Naive thymus-derived CD4-positive, alpha-beta T cell (primary cell): ENCODE measurements at regions of chr17 and their contacts with region 1.

Region 1: GRCh38 chr17:16438557-16439302 is 23.4 kb downstream of the TRPV2 start:
- DNase-seq: peak; percentile 81 to 97 (median 95)
- ATAC-seq: peak; percentile 93
- H3K4me3 ChIP-seq: peak overlapping the region; percentile 89
- H3K4me3 Mint-ChIP-seq: peak overlapping the region; percentile 91 to 100 (median 100)
- H3K27ac ChIP-seq: peak overlapping the region; percentile 92
- H3K27ac Mint-ChIP-seq: peak overlapping the region; percentile 91 to 100 (median 99)
- H3K4me1 ChIP-seq: peaks cover 27 to 41% of the 10 kb centered on the region in 2 donors
- H3K4me1 Mint-ChIP-seq: peaks cover 30 to 55% (median 47%) of the 10 kb centered on the region in 7 donors
- H3K27me3 ChIP-seq: no peaks in the 10 kb centered on the region
- H3K27me3 Mint-ChIP-seq: no peaks in the 10 kb centered on the region

Region 2: GRCh38 chr17:16285957-16286640 is 152.6 kb before region 1 on chr17:
- CTCF ChIA-PET with region 1: no interaction called
- POLR2A ChIA-PET with region 1: no interaction called
- intact Hi-C with region 1: loop called (anchors 2 to 5 kb)
- DNase-seq: peak; percentile 41 to 76 (median 72)
- ATAC-seq: peak; percentile 95
- H3K4me3 ChIP-seq: peak overlapping the region; percentile 53
- H3K4me3 Mint-ChIP-seq: peak overlapping the region; percentile 71 to 85 (median 80)
- H3K27ac ChIP-seq: peak overlapping the region; percentile 81
- H3K27ac Mint-ChIP-seq: peak overlapping the region; percentile 93 to 99 (median 97)
- H3K4me1 ChIP-seq: peaks cover 36 to 50% of the 10 kb centered on the region in 2 donors
- H3K4me1 Mint-ChIP-seq: peaks cover 41 to 68% (median 62%) of the 10 kb centered on the region in 7 donors
- H3K27me3 ChIP-seq: no peaks in the 10 kb centered on the region
- H3K27me3 Mint-ChIP-seq: no peaks in the 10 kb centered on the region

Region 3: DNA sequence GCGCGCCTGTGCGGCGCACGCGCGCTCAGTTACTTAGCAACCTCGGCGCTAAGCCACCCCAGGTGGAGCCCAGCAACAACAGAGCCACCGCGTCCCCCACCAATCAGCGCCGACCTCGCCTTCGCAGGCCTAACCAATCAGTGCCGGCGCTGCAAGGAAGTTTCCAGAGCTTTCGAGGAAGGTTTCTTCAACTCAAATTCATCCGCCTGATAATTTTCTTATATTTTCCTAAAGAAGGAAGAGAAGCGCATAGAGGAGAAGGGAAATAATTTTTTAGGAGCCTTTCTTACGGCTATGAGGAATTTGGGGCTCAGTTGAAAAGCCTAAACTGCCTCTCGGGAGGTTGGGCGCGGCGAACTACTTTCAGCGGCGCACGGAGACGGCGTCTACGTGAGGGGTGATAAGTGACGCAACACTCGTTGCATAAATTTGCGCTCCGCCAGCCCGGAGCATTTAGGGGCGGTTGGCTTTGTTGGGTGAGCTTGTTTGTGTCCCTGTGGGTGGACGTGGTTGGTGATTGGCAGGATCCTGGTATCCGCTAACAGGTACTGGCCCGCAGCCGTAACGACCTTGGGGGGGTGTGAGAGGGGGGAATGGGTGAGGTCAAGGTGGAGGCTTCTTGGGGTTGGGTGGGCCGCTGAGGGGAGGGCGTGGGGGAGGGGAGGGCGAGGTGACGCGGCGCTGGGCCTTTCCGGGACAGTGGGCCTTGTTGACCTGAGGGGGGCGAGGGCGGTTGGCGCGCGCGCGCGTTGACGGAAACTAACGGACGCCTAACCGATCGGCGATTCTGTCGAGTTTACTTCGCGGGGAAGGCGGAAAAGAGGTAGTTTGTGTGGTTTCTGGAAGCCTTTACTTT is 57.9 kb before region 1 on chr17 and contains the start of gene UBB:
- CTCF ChIA-PET with region 1: no interaction called
- POLR2A ChIA-PET with region 1: interaction called, 24 read pairs
- intact Hi-C with region 1: loop called (anchors 1 kb)
- DNase-seq: peak; percentile 83 to 97 (median 94)
- ATAC-seq: peak; percentile 96
- H3K4me3 ChIP-seq: peak within 1 kb of the TSS; percentile 66
- H3K4me3 Mint-ChIP-seq: peak within 1 kb of the TSS; percentile 85 to 99 (median 95)
- H3K27ac ChIP-seq: peak within 1 kb of the TSS; percentile 86
- H3K27ac Mint-ChIP-seq: peak within 1 kb of the TSS; percentile 93 to 100 (median 97)
- H3K4me1 ChIP-seq: peaks cover 6 to 13% of the 10 kb centered on the region in 2 donors
- H3K4me1 Mint-ChIP-seq: peaks cover 22 to 48% (median 39%) of the 10 kb centered on the region in 7 donors
- H3K27me3 ChIP-seq: no peaks in the 10 kb centered on the region
- H3K27me3 Mint-ChIP-seq: peaks cover 0 to 5% (median 0%) of the 10 kb centered on the region in 5 donors
- total RNA-seq, gene UBB: 537 to 1,283 (median 621) TPM

Region 4: DNA sequence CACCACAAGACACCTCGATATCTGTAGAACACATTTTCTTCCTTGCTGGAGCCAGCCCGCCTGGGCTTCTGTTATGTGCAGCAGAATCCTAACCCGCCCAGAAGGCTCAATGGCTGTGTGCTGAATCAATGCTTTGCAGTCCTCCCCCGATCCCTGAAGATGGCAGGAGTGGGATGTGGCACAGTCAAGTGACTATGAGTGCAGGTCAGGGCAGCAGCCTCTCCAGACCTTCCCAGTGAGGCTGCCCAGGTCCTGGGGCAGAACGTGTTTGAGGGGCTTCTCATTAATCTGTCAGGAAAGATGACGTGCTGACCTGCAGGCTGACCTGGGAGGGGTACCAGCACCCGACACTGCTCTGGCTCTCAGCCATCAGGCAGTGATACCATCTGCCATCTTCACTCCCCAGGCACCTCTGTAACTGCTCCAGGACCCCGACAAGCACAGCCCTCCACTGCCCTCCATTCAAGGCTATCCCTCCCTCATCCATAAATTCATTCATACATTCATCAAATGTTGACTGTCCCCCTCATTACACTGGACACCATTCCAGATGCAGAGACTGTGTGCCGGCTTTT is 18.1 kb after region 1 on chr17:
- CTCF ChIA-PET with region 1: interaction called, 9 read pairs
- POLR2A ChIA-PET with region 1: interaction called, 5 read pairs
- intact Hi-C with region 1: loop called in 1 of 2 experiments (anchors 1 kb)
- DNase-seq: no peak
- ATAC-seq: no peak
- H3K4me3 ChIP-seq: no peak overlapping the region
- H3K4me3 Mint-ChIP-seq: no peak overlapping the region
- H3K27ac ChIP-seq: no peak overlapping the region
- H3K27ac Mint-ChIP-seq: peak overlapping the region in 2 of 9 donors; percentile 23 to 45
- H3K4me1 ChIP-seq: no peaks in the 10 kb centered on the region
- H3K4me1 Mint-ChIP-seq: peaks cover 0 to 14% (median 7%) of the 10 kb centered on the region in 7 donors
- H3K27me3 ChIP-seq: no peaks in the 10 kb centered on the region
- H3K27me3 Mint-ChIP-seq: no peaks in the 10 kb centered on the region

Region 5: GRCh38 chr17:16568541-16569357 is 130.0 kb after region 1 on chr17 and contains the start of gene ZNF287:
- CTCF ChIA-PET with region 1: no interaction called
- POLR2A ChIA-PET with region 1: no interaction called
- intact Hi-C with region 1: loop called in 1 of 2 experiments (anchors 1 kb)
- DNase-seq: peak; percentile 81 to 96 (median 92)
- ATAC-seq: peak; percentile 98
- H3K4me3 ChIP-seq: peak within 1 kb of the TSS; percentile 73
- H3K4me3 Mint-ChIP-seq: peak within 1 kb of the TSS; percentile 81 to 87 (median 86)
- H3K27ac ChIP-seq: peak within 1 kb of the TSS; percentile 82
- H3K27ac Mint-ChIP-seq: peak within 1 kb of the TSS; percentile 59 to 97 (median 91)
- H3K4me1 ChIP-seq: peaks cover 6 to 14% of the 10 kb centered on the region in 2 donors
- H3K4me1 Mint-ChIP-seq: peaks cover 8 to 29% (median 19%) of the 10 kb centered on the region in 7 donors
- H3K27me3 ChIP-seq: no peaks in the 10 kb centered on the region
- H3K27me3 Mint-ChIP-seq: peaks cover 0 to 10% (median 0%) of the 10 kb centered on the region in 5 donors
- total RNA-seq, gene ZNF287: 9.6 to 18.1 (median 13.4) TPM

Region 6: DNA sequence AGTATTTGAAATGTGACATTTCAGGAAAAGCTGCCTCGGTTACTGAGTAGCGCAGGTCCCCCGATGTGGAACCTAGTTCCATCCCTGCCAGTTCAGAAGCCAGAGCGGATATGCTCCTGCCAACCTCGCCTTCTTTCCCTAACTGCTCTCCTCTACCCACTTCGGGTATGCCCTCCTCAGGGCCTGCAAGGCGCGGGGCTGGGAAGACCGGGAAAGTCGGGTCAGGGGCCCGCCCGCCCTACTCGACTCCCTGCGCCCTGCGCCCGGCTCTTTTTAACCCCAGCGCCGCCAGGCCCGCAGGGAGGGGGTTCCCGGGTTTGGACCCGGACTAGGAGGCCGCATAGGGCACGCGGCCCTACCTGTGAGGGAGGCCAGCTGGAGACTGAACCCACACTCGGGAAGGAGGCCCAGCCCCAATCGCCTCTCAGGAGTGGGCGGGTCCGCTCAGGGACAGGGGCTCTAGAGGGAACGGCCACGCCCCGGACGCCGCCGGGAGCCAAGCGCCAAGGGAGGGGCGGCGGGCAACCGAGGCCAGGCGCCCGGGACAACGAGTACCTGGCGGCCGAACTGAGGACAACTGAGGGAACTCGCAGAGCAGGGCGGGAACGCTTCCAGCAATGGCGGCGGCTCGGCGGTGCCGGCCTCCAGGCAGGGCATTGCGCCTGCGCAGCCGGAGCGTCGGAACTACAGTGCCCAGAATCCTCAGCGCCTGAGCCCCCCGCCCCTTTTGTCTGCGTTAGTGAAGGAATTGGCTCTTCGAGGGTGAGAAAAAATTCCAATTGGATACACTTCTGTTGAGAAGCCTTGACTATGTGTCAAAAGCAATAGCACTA is 214.7 kb after region 1 on chr17 and contains the start of gene ZNF624:
- CTCF ChIA-PET with region 1: no interaction called
- POLR2A ChIA-PET with region 1: no interaction called
- intact Hi-C with region 1: loop called (anchors 1 to 2 kb)
- DNase-seq: peak; percentile 75 to 87 (median 84)
- ATAC-seq: peak; percentile 98
- H3K4me3 ChIP-seq: peak within 1 kb of the TSS; percentile 76
- H3K4me3 Mint-ChIP-seq: peak within 1 kb of the TSS; percentile 81 to 93 (median 89)
- H3K27ac ChIP-seq: peak within 1 kb of the TSS; percentile 78
- H3K27ac Mint-ChIP-seq: peak within 1 kb of the TSS; percentile 7 to 91 (median 78)
- H3K4me1 ChIP-seq: peaks cover 0 to 11% of the 10 kb centered on the region in 2 donors
- H3K4me1 Mint-ChIP-seq: peaks cover 6 to 25% (median 21%) of the 10 kb centered on the region in 7 donors
- H3K27me3 ChIP-seq: no peaks in the 10 kb centered on the region
- H3K27me3 Mint-ChIP-seq: peaks cover 0 to 13% (median 0%) of the 10 kb centered on the region in 5 donors
- total RNA-seq, gene ZNF624: 3.8 to 11.4 (median 6.7) TPM